Gastrocnemius medialis (tissue), 4 donors: ENCODE measurements at regions of chr11 and their contacts with region 1.

Region 1: DNA sequence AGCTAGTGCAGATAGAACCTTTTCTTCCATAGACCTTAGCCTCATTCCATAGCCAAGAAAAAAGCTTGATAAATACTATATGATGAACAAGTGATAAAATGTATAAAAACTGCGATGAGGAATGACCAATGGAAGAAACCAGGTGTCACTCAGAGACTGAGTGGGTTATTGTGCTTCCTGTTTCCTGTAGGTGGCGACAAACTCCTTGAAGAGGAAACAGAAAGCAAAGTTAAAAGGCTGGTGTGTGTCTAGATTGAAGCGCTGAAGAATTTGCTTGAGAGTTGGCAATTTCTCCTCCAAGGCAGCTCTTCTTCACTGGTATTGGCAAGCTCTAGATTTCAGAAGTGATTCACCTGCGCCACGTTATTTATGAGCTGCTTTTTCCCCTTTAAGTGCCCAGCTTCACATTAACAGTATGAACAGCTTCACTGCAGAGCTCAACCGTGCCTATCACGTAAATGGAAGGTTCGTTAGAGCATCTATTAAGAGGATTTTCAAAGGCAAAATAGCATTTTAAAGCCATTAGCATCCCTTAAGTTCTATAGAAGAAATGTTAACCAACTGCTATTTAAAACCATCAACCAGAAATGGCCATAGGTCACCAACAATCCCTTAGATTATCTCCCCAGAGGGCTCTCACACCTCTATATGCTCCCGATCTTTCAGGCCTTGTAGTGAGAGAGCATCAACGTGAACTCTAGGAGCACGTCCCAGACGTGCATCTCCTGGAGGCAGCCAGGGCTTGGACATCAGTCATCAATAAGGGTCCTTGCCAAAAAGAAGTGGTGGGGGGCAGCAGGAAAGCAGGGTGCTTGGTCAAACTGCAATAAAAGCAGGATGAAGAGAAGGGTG is 179.4 kb downstream of the CADM1 start:
- DNase-seq: peak in 1 of 2 donors; percentile 20
- ATAC-seq: peak; percentile 93 to 97
- H3K4me3 ChIP-seq: peak overlapping the region; percentile 10 to 56 (median 30)
- H3K27ac ChIP-seq: peak overlapping the region in 1 of 4 donors; percentile 23
- H3K4me1 ChIP-seq: peaks cover 5 to 9% of the 10 kb centered on the region in 2 donors
- H3K27me3 ChIP-seq: no peaks in the 10 kb centered on the region
- CTCF ChIP-seq: peak; percentile 55 to 85 (median 70)
- POLR2A ChIP-seq: no peak

Region 2: GRCh38 chr11:115238791-115239190 is 86.0 kb before region 1 on chr11:
- in situ Hi-C with region 1: no loop called
- intact Hi-C with region 1: no loop called
- DNase-seq: no peak
- ATAC-seq: no peak
- H3K4me3 ChIP-seq: no peak overlapping the region
- H3K27ac ChIP-seq: no peak overlapping the region
- H3K4me1 ChIP-seq: peaks cover 0 to 3% of the 10 kb centered on the region in 2 donors
- H3K27me3 ChIP-seq: no peaks in the 10 kb centered on the region
- CTCF ChIP-seq: no peak
- POLR2A ChIP-seq: no peak

Region 3: GRCh38 chr11:115716601-115717529 is 392.1 kb after region 1 on chr11:
- in situ Hi-C with region 1: no loop called
- intact Hi-C with region 1: no loop called
- DNase-seq: no peak
- ATAC-seq: no peak
- H3K4me3 ChIP-seq: no peak overlapping the region
- H3K27ac ChIP-seq: no peak overlapping the region
- H3K4me1 ChIP-seq: peaks cover 0 to 2% of the 10 kb centered on the region in 2 donors
- H3K27me3 ChIP-seq: no peaks in the 10 kb centered on the region
- CTCF ChIP-seq: no peak
- POLR2A ChIP-seq: no peak

Region 4: GRCh38 chr11:116224154-116224888 is 899.5 kb after region 1 on chr11:
- in situ Hi-C with region 1: loop called in 1 of 4 experiments (anchors 25 kb)
- intact Hi-C with region 1: loop called (anchors 2 kb)
- DNase-seq: no peak
- ATAC-seq: no peak
- H3K4me3 ChIP-seq: no peak overlapping the region
- H3K27ac ChIP-seq: no peak overlapping the region
- H3K4me1 ChIP-seq: no peaks in the 10 kb centered on the region
- H3K27me3 ChIP-seq: no peaks in the 10 kb centered on the region
- CTCF ChIP-seq: peak in 4 of 5 experiments; percentile 24 to 66 (median 50)
- POLR2A ChIP-seq: no peak

Region 5: GRCh38 chr11:116257104-116257503 is 932.3 kb after region 1 on chr11:
- in situ Hi-C with region 1: loop called in 1 of 4 experiments (anchors 25 kb)
- intact Hi-C with region 1: no loop called
- DNase-seq: no peak
- ATAC-seq: no peak
- H3K4me3 ChIP-seq: no peak overlapping the region
- H3K27ac ChIP-seq: no peak overlapping the region
- H3K4me1 ChIP-seq: no peaks in the 10 kb centered on the region
- H3K27me3 ChIP-seq: peaks cover 0 to 10% (median 4%) of the 10 kb centered on the region in 3 donors
- CTCF ChIP-seq: no peak
- POLR2A ChIP-seq: no peak

Region 6: DNA sequence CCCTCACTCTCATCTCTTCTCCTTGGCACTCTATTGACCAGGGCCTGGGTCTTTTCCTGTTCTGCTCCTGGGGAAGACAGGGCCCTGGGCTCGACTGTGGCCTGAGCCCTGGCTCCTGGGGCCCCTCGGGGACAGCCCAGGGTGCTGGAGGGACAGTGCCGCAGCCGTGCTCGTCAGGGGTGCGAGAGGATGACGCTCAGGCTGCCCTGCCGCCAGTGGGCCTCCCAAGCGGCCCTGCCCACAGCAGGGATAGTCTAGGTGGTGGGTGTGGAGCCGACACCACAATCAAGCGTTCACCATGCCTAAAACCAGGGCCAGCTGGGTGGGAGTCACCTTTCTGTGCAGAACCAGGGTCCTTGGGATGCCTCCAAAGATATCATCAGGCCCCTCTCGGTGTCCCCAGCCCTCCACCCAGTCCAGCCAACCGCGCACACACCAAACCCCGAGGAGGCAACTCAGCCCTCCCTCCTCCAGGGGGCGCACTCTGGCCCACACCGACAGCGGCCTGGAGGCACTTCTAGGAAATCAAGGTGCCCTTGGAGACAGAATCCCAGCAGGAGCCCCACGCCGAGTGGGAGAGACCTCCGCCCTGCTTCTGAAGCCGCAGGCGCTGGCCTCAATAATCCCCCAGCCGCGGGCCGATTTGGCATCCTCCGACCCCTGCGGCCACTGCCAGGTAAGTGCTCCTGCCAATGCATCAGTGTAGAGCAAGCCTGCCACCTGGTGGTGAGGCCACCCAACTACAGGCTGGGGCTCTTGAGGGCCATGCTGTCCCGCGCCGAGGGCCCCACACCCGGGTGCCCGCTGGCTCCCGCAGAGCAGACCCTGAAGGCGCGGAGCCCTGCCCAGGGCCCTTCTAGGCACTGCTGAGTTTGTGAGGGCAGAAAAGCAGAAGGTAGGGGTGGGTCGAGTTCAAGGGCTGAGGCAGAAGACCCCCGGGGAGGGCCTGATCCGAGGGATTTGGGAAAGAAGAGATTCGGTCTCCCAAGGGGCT is 951.5 kb after region 1 on chr11:
- in situ Hi-C with region 1: loop called in 3 of 4 experiments (anchors 10 to 25 kb)
- intact Hi-C with region 1: loop called (anchors 1 kb)
- DNase-seq: peak in 1 of 2 donors; percentile 52
- ATAC-seq: peak in 1 of 2 donors; percentile 69
- H3K4me3 ChIP-seq: peak overlapping the region in 3 of 4 donors; percentile 19 to 47 (median 31)
- H3K27ac ChIP-seq: no peak overlapping the region
- H3K4me1 ChIP-seq: no peaks in the 10 kb centered on the region
- H3K27me3 ChIP-seq: no peaks in the 10 kb centered on the region
- CTCF ChIP-seq: peak; percentile 64 to 96 (median 87)
- POLR2A ChIP-seq: no peak

Region 7: DNA sequence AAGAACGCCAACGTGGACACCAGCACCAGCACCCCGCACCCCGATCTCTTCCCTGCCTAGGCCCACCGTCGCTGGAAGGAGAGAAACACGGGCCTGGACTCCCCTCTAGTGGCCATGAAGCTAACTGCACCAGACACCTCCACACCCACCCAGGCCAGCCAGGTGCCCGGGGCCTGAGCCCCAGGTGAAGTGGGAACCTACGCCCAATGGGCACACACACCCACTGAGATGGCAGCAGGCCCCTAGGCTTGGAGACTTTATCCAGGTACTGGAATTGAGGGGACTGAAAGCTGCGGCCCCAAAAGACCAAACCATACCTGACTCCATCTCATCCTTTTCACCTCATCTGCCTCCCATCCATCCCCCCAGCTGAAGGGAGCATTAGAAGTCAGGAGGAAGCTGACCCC is 1367.0 kb after region 1 on chr11:
- in situ Hi-C with region 1: loop called in 1 of 4 experiments (anchors 25 kb)
- intact Hi-C with region 1: no loop called
- DNase-seq: no peak
- ATAC-seq: peak; percentile 47 to 58
- H3K4me3 ChIP-seq: no peak overlapping the region
- H3K27ac ChIP-seq: no peak overlapping the region
- H3K4me1 ChIP-seq: no peaks in the 10 kb centered on the region
- H3K27me3 ChIP-seq: peaks cover 0 to 7% (median 0%) of the 10 kb centered on the region in 3 donors
- CTCF ChIP-seq: peak; percentile 59 to 81 (median 73)
- POLR2A ChIP-seq: no peak